Activated naive CD4-positive, alpha-beta T cell treated with anti-CD3 and anti-CD28 coated beads for 36 hours (primary cell): ENCODE measurements at regions of chr11 and their contacts with region 1.

Region 1: GRCh38 chr11:116787786-116788486 is at the start of gene ZPR1:
- DNase-seq: peak; percentile 87
- H3K4me3 Mint-ChIP-seq: peak within 1 kb of the TSS; percentile 92
- H3K27ac Mint-ChIP-seq: peak within 1 kb of the TSS; percentile 87
- H3K4me1 Mint-ChIP-seq: peaks cover 51% of the 10 kb centered on the region
- H3K27me3 Mint-ChIP-seq: no peaks in the 10 kb centered on the region
- total RNA-seq, gene ZPR1: 87.2 to 87.8 TPM

Region 2: DNA sequence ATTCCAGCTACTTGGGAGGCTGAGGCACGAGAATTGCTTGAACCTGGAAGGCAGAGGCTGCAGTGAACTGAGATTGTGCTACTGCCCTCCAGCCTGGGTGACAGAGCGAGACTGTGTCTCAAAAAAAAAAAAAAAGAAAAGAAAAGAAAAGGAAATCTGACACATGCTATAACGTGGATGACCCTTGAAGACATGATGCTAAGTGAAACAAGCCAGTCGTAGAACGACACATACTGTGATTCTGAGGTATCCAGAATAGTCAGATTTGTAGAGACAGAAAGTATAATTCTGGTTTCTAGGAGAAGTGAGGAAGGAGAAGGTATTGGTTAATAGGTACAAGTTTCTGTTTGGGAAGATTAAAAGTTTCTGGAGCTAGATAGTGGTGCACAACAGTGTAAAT is 10.4 kb after region 1 on chr11:
- CTCF ChIA-PET with region 1: interaction called, 10 read pairs
- intact Hi-C with region 1: no loop called
- DNase-seq: no peak
- H3K4me3 Mint-ChIP-seq: no peak overlapping the region
- H3K27ac Mint-ChIP-seq: no peak overlapping the region
- H3K4me1 Mint-ChIP-seq: no peaks in the 10 kb centered on the region
- H3K27me3 Mint-ChIP-seq: peaks cover 2% of the 10 kb centered on the region

Region 3: GRCh38 chr11:116808386-116809194 is 20.7 kb after region 1 on chr11:
- CTCF ChIA-PET with region 1: interaction called, 11 read pairs
- intact Hi-C with region 1: no loop called
- DNase-seq: no peak
- H3K4me3 Mint-ChIP-seq: no peak overlapping the region
- H3K27ac Mint-ChIP-seq: no peak overlapping the region
- H3K4me1 Mint-ChIP-seq: no peaks in the 10 kb centered on the region
- H3K27me3 Mint-ChIP-seq: no peaks in the 10 kb centered on the region

Region 4: DNA sequence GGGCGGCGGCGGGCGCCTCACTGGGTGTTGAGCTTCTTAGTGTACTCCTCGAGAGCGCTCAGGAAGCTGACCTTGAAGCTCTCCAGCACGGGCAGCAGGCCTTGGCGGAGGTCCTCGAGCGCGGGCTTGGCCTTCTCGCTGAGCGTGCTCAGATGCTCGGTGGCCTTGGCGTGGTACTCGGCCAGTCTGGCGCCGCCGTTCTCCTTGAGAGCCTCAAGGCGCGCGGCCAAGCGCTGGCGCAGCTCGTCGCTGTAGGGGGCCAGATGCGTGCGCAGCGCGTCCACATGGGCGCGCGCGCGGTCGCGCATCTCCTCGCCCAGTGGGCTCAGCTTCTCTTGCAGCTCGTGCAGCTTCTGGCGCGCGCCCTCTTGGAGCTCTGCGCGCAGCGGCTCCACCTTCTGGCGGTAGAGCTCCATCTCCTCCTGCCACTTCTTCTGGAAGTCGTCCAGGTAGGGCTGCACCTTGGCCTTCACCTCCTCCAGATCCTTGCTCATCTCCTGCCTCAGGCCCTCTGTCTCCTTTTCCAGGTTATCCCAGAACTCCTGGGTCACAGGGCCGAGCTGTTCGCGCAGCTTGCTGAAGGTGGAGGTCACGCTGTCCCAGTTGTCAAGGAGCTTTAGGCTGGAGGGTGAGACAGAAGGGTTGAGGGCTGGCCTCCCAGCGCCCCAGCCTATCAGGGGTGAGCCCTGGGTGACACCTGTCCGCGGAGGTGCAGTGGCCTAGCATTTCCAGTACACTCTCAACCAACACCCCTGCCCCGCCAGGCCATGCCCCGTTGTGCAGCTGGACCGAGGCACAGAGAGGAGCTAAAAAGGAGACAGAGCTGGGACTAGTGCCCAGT is 48.1 kb after region 1 on chr11:
- CTCF ChIA-PET with region 1: interaction called, 134 read pairs
- intact Hi-C with region 1: loop called (anchors 1 kb)
- DNase-seq: peak; percentile 86
- H3K4me3 Mint-ChIP-seq: peak overlapping the region; percentile 69
- H3K27ac Mint-ChIP-seq: no peak overlapping the region
- H3K4me1 Mint-ChIP-seq: peaks cover 8% of the 10 kb centered on the region
- H3K27me3 Mint-ChIP-seq: peaks cover 4% of the 10 kb centered on the region

Region 5: DNA sequence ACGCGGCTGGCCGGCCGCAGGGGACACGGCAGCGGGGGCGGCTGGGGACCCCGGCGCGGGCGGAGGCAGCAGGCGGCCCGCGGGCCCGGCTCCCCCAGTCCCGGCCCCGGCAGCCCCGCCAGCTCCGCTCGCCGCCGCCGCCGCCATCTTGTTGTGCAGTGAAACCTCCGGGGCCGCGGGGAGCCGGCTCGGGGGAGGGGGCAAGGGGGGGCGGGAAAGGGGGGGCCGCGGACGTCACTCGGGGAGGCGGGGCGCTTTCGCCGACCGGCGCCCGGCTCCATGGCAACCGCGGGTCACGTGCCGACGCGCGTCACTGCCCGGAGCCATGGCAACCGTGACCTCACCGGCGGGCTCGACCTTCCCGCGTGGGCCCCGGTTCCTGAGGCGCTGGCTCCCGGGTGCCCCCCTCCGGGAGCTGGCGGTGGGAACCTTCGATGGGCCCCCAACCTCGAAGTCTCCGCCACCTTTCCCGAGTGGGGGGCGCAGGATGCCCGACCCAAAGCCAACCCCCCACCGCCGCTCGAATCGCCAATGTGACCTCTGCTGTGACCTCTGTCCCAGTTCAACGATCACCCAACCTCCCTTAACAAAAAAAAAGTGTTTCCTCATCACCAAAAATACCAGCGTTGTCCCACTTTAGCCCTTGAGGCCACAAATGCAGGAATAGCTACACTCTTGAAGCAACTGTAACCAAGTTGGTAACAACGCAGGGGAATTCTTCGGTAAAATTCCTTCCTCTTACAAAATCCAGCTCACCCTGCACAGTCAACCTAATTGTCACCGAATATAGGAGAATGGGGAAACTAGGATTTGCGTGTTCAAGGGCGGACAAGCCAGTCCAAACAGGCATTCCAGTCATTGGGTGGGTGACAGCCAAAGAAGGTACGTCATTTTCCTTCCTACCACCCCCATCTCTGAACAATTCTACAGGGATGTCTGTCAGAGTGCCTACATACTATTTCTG is 310.6 kb after region 1 on chr11 and contains the start of gene SIK3:
- CTCF ChIA-PET with region 1: interaction called, 10 read pairs
- intact Hi-C with region 1: loop called (anchors 5 kb)
- DNase-seq: peak; percentile 90
- H3K4me3 Mint-ChIP-seq: peak within 1 kb of the TSS; percentile 97
- H3K27ac Mint-ChIP-seq: peak within 1 kb of the TSS; percentile 89
- H3K4me1 Mint-ChIP-seq: peaks cover 47% of the 10 kb centered on the region
- H3K27me3 Mint-ChIP-seq: no peaks in the 10 kb centered on the region
- total RNA-seq, gene SIK3: 13.8 to 15.7 TPM

Region 6: DNA sequence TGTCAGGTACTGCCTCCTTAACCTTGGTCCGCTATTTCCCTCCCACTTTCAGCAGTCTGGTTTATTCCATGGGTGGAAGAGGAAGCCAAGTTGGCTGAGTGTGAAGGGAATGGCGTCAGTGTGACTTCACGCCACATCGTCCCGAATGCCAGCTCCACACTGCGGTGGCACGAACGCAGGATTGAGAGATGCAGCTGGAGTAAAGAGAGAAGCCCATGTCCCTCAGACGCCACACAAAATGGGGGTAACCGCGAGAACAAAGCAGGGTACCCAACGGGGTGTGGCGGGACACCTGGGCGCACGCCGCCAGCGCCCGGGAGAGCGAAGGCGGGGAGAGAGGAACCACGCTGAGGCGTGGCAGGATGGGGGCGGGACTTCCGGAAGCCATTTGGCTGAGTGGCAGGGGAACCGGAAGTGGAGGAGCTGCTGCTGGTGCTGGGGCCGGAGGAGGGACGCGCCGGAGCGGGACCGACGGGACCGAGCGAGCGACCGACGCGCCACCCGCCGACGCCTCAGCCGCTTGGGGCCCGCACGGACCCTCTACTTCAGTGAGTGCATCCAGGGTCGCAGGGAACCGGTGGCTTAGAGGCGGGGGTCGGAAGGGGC is 356.0 kb after region 1 on chr11 and contains the start of gene PAFAH1B2:
- CTCF ChIA-PET with region 1: interaction called, 13 read pairs
- intact Hi-C with region 1: no loop called
- DNase-seq: peak; percentile 98
- H3K4me3 Mint-ChIP-seq: peak within 1 kb of the TSS; percentile 95
- H3K27ac Mint-ChIP-seq: peak within 1 kb of the TSS; percentile 91
- H3K4me1 Mint-ChIP-seq: peaks cover 37% of the 10 kb centered on the region
- H3K27me3 Mint-ChIP-seq: no peaks in the 10 kb centered on the region
- total RNA-seq, gene PAFAH1B2: 43.7 to 44.3 TPM